ENCODE measurements at regions of chr7 and their contacts with region 1.

Region 1: GRCh38 chr7:16619979-16620408 is 25.6 kb downstream of the ANKMY2 start:
- DNase-seq: peak; percentile 33
- H3K4me3 Mint-ChIP-seq: peak overlapping the region; percentile 23
- H3K27ac Mint-ChIP-seq: peak overlapping the region; percentile 81
- H3K4me1 Mint-ChIP-seq: peaks cover 13% of the 10 kb centered on the region
- H3K27me3 Mint-ChIP-seq: no peaks in the 10 kb centered on the region

Region 2: DNA sequence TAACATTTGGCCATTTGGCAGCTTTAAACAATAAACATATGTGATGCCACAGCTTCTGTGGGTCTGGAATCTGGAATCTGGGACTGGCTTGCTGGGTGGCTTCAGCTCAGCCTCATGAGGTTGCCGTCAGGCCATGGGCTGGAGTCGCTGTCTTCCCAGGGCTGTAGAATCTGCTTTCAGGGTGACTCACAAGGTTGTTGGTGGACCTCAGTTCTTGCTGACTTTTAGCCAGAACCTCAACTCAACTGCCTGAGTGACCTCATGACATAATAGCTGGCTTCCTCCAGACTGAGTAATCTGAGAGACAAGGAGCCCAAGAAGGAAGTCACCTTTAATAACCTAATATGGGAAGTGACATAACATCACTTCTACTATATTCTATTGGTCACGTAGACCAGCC is 89.0 kb after region 1 on chr7:
- CTCF ChIA-PET with region 1: no interaction called
- intact Hi-C with region 1: loop called (anchors 1 kb)
- DNase-seq: no peak
- H3K4me3 Mint-ChIP-seq: no peak overlapping the region
- H3K27ac Mint-ChIP-seq: no peak overlapping the region
- H3K4me1 Mint-ChIP-seq: peaks cover 25% of the 10 kb centered on the region
- H3K27me3 Mint-ChIP-seq: no peaks in the 10 kb centered on the region

Measured in activated naive CD4-positive, alpha-beta T cell treated with anti-CD3 and anti-CD28 coated beads for 36 hours (primary cell).